CD8-positive, alpha-beta T cell (primary cell): ENCODE measurements at regions of chr19 and their contacts with region 1.

Region 1: GRCh38 chr19:1275260-1275975 is at the start of gene FAM174C:
- DNase-seq: peak; percentile 88 to 99 (median 95)
- ATAC-seq: peak; percentile 75
- H3K4me3 ChIP-seq: peak within 1 kb of the TSS; percentile 77 to 79
- H3K4me3 Mint-ChIP-seq: peak within 1 kb of the TSS; percentile 83
- H3K27ac ChIP-seq: peak within 1 kb of the TSS; percentile 84 to 94
- H3K27ac Mint-ChIP-seq: peak within 1 kb of the TSS; percentile 92
- H3K4me1 ChIP-seq: peaks cover 61% of the 10 kb centered on the region
- H3K4me1 Mint-ChIP-seq: peaks cover 52% of the 10 kb centered on the region
- H3K27me3 ChIP-seq: no peaks in the 10 kb centered on the region
- H3K27me3 Mint-ChIP-seq: no peaks in the 10 kb centered on the region
- CTCF ChIP-seq: no peak
- total RNA-seq, gene FAM174C: 36.2 to 37.4 TPM

Region 2: GRCh38 chr19:1205114-1206062 is 70.0 kb before region 1 on chr19 and contains the start of gene STK11:
- CTCF ChIA-PET with region 1: interaction called, 3 read pairs
- POLR2A ChIA-PET with region 1: no interaction called
- intact Hi-C with region 1: loop called in 1 of 2 experiments (anchors 1 kb)
- DNase-seq: peak; percentile 98 to 100 (median 99)
- ATAC-seq: peak; percentile 93
- H3K4me3 ChIP-seq: peak within 1 kb of the TSS; percentile 78 to 79
- H3K4me3 Mint-ChIP-seq: peak within 1 kb of the TSS; percentile 92
- H3K27ac ChIP-seq: peak within 1 kb of the TSS; percentile 51 to 62
- H3K27ac Mint-ChIP-seq: peak within 1 kb of the TSS; percentile 85
- H3K4me1 ChIP-seq: peaks cover 50% of the 10 kb centered on the region
- H3K4me1 Mint-ChIP-seq: peaks cover 43% of the 10 kb centered on the region
- H3K27me3 ChIP-seq: no peaks in the 10 kb centered on the region
- H3K27me3 Mint-ChIP-seq: no peaks in the 10 kb centered on the region
- CTCF ChIP-seq: no peak
- total RNA-seq, gene STK11: 38.0 to 43.4 TPM

Region 3: DNA sequence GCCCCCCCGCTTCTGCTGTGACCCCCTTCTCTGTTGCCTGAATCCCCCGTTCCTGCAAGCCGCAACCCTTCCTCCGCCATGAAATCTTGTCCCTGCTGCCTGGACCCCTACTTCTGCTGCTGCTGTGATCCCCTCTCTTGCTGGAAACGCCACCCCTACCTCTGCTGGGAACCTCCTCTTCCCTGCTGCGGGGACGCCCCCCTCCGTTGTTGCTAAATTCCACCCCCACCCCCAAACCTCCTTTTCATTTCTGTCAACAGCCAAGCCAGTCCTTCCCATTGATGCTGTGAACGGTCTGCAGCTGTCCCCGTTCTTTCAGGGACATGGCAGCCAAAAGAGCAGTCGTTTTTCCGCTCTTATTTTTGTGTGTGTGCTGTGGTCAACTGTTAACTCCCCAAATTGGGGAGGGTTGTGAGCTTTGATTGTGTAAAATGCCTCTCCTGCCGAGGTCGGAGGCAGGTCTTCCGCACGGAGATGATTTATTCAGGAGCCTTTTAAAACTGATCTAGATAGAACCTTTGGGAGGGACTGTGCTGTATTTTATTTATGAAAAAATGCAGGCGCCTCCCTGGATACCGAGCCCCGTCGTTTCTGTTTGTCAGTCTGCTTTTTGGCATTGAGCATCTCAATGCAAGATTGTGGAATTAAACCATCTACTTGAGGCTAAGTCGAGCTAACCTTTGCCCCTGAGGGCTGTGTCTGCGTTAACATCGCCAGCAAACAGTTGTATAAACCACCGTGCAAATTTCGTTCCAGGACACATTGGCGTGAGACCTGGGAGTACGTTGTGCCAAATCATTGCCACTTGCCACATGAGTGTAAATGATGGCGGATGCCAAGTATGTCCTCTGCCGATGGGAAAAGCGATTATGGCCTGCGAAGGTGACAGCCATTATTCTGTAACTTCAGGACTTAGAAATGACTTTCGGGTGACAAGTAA is 80.4 kb after region 1 on chr19:
- CTCF ChIA-PET with region 1: interaction called, 3 read pairs
- POLR2A ChIA-PET with region 1: interaction called, 4 read pairs
- intact Hi-C with region 1: loop called (anchors 5 kb)
- DNase-seq: peak in 1 of 9 experiments; percentile 33
- ATAC-seq: no peak
- H3K4me3 ChIP-seq: peak overlapping the region; percentile 71 to 74
- H3K4me3 Mint-ChIP-seq: peak overlapping the region; percentile 85
- H3K27ac ChIP-seq: no peak overlapping the region
- H3K27ac Mint-ChIP-seq: peak overlapping the region; percentile 4
- H3K4me1 ChIP-seq: peaks cover 10% of the 10 kb centered on the region
- H3K4me1 Mint-ChIP-seq: peaks cover 12% of the 10 kb centered on the region
- H3K27me3 ChIP-seq: no peaks in the 10 kb centered on the region
- H3K27me3 Mint-ChIP-seq: no peaks in the 10 kb centered on the region
- CTCF ChIP-seq: no peak

Region 4: GRCh38 chr19:1406774-1407499 is 131.5 kb after region 1 on chr19:
- CTCF ChIA-PET with region 1: interaction called, 7 read pairs
- POLR2A ChIA-PET with region 1: interaction called, 4 read pairs
- intact Hi-C with region 1: loop called (anchors 1 kb)
- DNase-seq: peak; percentile 99 to 100 (median 99)
- ATAC-seq: peak; percentile 80
- H3K4me3 ChIP-seq: peak overlapping the region; percentile 52 to 59
- H3K4me3 Mint-ChIP-seq: peak overlapping the region; percentile 79
- H3K27ac ChIP-seq: peak overlapping the region; percentile 56 to 80
- H3K27ac Mint-ChIP-seq: peak overlapping the region; percentile 89
- H3K4me1 ChIP-seq: peaks cover 48% of the 10 kb centered on the region
- H3K4me1 Mint-ChIP-seq: peaks cover 41% of the 10 kb centered on the region
- H3K27me3 ChIP-seq: no peaks in the 10 kb centered on the region
- H3K27me3 Mint-ChIP-seq: no peaks in the 10 kb centered on the region
- CTCF ChIP-seq: peak; percentile 70

Region 5: DNA sequence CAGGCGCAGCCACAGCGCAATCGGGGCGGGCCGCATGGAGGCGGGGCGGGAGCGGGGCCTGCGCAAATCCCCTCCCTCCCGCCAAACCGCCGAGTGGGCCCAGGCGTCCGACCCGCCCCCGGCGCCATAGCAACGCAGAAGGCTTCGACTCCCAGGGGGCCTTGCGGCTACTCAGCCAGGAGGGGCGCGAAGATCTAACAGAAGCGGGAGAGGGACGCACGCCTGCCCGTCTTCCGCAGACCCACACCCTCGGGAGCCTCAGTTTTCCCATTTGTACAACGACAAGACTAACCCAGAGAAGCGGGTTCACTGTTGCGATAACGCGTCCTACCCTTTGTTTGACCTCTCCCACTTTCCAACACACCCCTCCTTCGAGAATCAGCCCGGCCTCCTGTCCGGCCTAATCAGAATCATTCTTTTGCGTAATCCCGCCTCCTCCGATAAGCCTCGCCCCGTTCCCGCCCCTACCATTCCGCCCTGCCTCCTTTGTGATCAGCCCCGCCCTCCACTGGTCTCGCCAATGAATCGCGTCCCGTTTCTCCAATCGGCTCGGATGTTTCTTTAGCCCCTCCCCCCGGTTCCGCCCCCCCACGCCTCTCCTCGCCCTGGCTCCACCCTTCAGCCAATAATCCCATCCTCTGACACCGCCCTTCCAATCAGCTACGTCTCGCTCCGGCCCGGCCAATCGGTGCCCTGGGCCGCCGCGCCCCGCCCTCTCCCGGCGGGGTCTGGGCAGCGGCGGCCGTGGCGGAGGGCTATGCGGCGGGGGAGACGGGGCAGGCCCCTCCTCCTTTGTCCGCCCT is 215.1 kb after region 1 on chr19 and contains the start of gene PCSK4:
- CTCF ChIA-PET with region 1: no interaction called
- POLR2A ChIA-PET with region 1: no interaction called
- intact Hi-C with region 1: loop called in 1 of 2 experiments (anchors 5 kb)
- DNase-seq: peak; percentile 95 to 99 (median 97)
- ATAC-seq: peak; percentile 88
- H3K4me3 ChIP-seq: peak within 1 kb of the TSS; percentile 59 to 71
- H3K4me3 Mint-ChIP-seq: peak within 1 kb of the TSS; percentile 90
- H3K27ac ChIP-seq: peak within 1 kb of the TSS; percentile 35 to 57
- H3K27ac Mint-ChIP-seq: peak within 1 kb of the TSS; percentile 90
- H3K4me1 ChIP-seq: peaks cover 15% of the 10 kb centered on the region
- H3K4me1 Mint-ChIP-seq: peaks cover 16% of the 10 kb centered on the region
- H3K27me3 ChIP-seq: no peaks in the 10 kb centered on the region
- H3K27me3 Mint-ChIP-seq: no peaks in the 10 kb centered on the region
- CTCF ChIP-seq: no peak
- total RNA-seq, gene PCSK4: 5.4 to 6.1 TPM

Region 6: GRCh38 chr19:1513499-1514294 is 238.3 kb after region 1 on chr19:
- CTCF ChIA-PET with region 1: no interaction called
- POLR2A ChIA-PET with region 1: no interaction called
- intact Hi-C with region 1: loop called (anchors 5 to 10 kb)
- DNase-seq: peak in 8 of 9 experiments; percentile 45 to 79 (median 76)
- ATAC-seq: peak; percentile 67
- H3K4me3 ChIP-seq: no peak overlapping the region
- H3K4me3 Mint-ChIP-seq: no peak overlapping the region
- H3K27ac ChIP-seq: no peak overlapping the region
- H3K27ac Mint-ChIP-seq: no peak overlapping the region
- H3K4me1 ChIP-seq: peaks cover 12% of the 10 kb centered on the region
- H3K4me1 Mint-ChIP-seq: peaks cover 11% of the 10 kb centered on the region
- H3K27me3 ChIP-seq: peaks cover 5 to 12% of the 10 kb centered on the region in 2 experiments
- H3K27me3 Mint-ChIP-seq: peaks cover 10% of the 10 kb centered on the region
- CTCF ChIP-seq: peak; percentile 66

Region 7: GRCh38 chr19:1700002-1700732 is 424.7 kb after region 1 on chr19:
- CTCF ChIA-PET with region 1: no interaction called
- POLR2A ChIA-PET with region 1: no interaction called
- intact Hi-C with region 1: no loop called
- DNase-seq: no peak
- ATAC-seq: no peak
- H3K4me3 ChIP-seq: no peak overlapping the region
- H3K4me3 Mint-ChIP-seq: no peak overlapping the region
- H3K27ac ChIP-seq: no peak overlapping the region
- H3K27ac Mint-ChIP-seq: no peak overlapping the region
- H3K4me1 ChIP-seq: peaks cover 12% of the 10 kb centered on the region
- H3K4me1 Mint-ChIP-seq: peaks cover 12% of the 10 kb centered on the region
- H3K27me3 ChIP-seq: peaks cover 9 to 20% of the 10 kb centered on the region in 2 experiments
- H3K27me3 Mint-ChIP-seq: peaks cover 24% of the 10 kb centered on the region
- CTCF ChIP-seq: no peak